Calu3 (cell line): ENCODE measurements at regions of chr11 and their contacts with region 1.

Region 1: GRCh38 chr11:19525276-19526113 is 187.1 kb upstream of the NAV2 start:
- DNase-seq: no peak
- H3K4me3 Mint-ChIP-seq: no peak overlapping the region
- H3K27ac Mint-ChIP-seq: no peak overlapping the region
- H3K4me1 Mint-ChIP-seq: no peaks in the 10 kb centered on the region
- H3K27me3 Mint-ChIP-seq: peaks cover 75% of the 10 kb centered on the region
- CTCF ChIP-seq: no peak

Region 2: GRCh38 chr11:17864478-17864941 is 1661.0 kb before region 1 on chr11:
- CTCF ChIA-PET with region 1: no interaction called
- intact Hi-C with region 1: no loop called
- DNase-seq: peak; percentile 51
- H3K4me3 Mint-ChIP-seq: no peak overlapping the region
- H3K27ac Mint-ChIP-seq: no peak overlapping the region
- H3K4me1 Mint-ChIP-seq: no peaks in the 10 kb centered on the region
- H3K27me3 Mint-ChIP-seq: no peaks in the 10 kb centered on the region
- CTCF ChIP-seq: peak; percentile 36

Region 3: GRCh38 chr11:19703211-19703610 is 177.7 kb after region 1 on chr11:
- CTCF ChIA-PET with region 1: interaction called, 11 read pairs
- intact Hi-C with region 1: no loop called
- DNase-seq: no peak
- H3K4me3 Mint-ChIP-seq: no peak overlapping the region
- H3K27ac Mint-ChIP-seq: no peak overlapping the region
- H3K4me1 Mint-ChIP-seq: peaks cover 15% of the 10 kb centered on the region
- H3K27me3 Mint-ChIP-seq: no peaks in the 10 kb centered on the region
- CTCF ChIP-seq: no peak